Mammary epithelial cell (primary cell): ENCODE measurements at regions of chr11 and their contacts with region 1.

Region 1: DNA sequence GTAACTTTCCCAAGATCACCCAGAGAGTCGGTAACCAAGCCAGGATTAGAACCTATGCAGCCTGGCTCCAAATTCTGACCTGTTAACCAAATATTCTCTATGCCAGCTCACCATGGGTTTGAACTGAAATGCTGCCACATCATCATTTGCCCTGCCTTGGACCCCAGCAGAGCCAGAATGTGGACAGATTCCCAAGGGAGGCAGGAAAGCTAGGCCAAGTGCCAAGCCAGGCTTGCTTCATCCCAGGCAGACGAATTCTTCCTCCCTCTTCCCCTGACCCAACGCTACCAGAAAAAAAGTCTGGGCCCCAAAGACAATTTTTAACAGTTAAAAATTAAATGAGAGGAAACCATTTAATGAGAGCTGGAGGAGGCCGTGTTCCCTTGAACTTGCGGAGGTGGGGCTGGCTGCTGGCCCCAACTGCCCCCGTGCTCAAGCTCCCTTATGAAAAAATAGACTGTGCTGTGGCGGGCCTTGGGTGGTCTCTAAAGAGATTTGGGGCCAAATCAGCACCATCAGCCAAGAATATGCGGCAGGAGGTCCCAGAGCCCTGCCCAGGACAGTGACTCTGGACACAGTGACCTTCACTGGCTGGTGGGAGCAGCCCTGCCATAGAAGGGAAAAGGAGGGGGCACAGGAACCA is 184.1 kb upstream of the SYT13 start:
- DNase-seq: no peak
- H3K4me3 ChIP-seq: no peak overlapping the region
- H3K27ac ChIP-seq: no peak overlapping the region
- H3K4me1 ChIP-seq: no peaks in the 10 kb centered on the region
- H3K27me3 ChIP-seq: no peaks in the 10 kb centered on the region
- CTCF ChIP-seq: no peak

Region 2: DNA sequence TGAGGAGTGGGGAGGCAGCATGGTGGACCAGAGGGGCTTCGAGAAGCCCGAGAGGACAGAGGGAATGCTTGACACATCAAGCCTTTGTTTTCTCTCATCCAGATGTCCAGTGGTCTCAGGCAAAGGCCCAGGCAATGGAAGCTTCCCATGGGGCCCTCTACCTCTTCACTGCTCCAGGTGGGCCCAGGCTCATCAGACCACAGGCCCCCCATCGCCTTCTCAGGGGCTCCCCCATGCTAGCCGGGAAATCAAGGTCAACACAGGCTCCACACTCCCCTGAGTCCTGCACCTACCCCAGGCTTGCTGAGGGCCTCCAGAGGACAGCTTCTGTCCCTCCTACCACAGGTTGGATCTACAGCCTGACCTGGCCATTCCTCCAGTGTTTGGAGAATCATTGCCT is 37.6 kb after region 1 on chr11:
- CTCF ChIA-PET with region 1: no interaction called
- dilution Hi-C with region 1: loop called (anchors 5 kb)
- in situ Hi-C with region 1: no loop called
- intact Hi-C with region 1: no loop called
- DNase-seq: no peak
- H3K4me3 ChIP-seq: no peak overlapping the region
- H3K27ac ChIP-seq: no peak overlapping the region
- H3K4me1 ChIP-seq: no peaks in the 10 kb centered on the region
- H3K27me3 ChIP-seq: no peaks in the 10 kb centered on the region
- CTCF ChIP-seq: no peak

Region 3: DNA sequence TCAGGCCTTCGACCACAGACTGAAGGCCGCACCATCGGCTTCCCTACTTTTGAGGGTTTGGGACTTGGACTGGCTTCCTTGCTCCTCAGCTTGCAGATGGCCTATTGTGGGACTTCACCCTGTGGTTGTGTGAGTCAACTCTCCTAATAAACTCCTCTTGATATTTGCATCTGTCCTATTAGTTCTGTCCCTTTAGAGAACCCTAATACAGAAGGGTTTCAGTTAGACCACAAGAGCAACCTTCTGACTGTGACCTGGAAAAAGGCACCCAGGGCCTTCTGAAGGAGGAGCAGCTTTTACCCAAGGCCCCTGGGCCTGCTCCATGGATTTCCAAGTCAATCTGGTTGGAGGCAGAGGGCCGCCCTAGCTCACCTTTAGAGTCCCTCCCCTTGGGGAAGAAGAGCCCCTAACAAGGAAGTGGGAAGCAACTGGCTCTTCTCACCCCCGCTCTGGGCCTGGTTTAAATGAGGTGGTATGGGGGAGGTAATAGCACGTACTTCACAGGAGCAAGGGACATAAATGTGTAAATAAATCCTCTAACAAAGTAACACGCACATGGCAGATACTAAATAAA is 206.3 kb after region 1 on chr11:
- CTCF ChIA-PET with region 1: no interaction called
- dilution Hi-C with region 1: no loop called
- in situ Hi-C with region 1: no loop called
- intact Hi-C with region 1: no loop called
- DNase-seq: no peak
- H3K4me3 ChIP-seq: no peak overlapping the region
- H3K27ac ChIP-seq: no peak overlapping the region
- H3K4me1 ChIP-seq: no peaks in the 10 kb centered on the region
- H3K27me3 ChIP-seq: no peaks in the 10 kb centered on the region
- CTCF ChIP-seq: no peak

Region 4: DNA sequence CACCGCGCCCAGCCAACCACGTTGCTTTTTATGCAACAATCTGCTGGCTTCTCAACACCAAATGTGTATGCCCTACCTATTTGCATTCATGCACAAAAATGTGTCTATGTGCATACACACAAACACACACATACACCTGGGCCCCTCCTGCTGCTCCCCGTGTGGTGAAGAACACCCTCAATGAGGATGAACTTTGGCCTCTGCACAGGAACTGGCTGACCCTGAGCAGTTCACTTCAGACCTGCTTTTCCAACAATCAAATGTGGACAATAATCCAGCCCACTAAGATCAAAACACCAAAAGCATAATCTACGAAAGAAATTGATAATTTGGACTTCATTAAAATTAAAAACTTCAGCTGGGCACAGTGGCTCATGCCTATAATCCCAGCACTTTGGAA is 309.3 kb after region 1 on chr11:
- CTCF ChIA-PET with region 1: no interaction called
- dilution Hi-C with region 1: no loop called
- in situ Hi-C with region 1: no loop called
- intact Hi-C with region 1: no loop called
- DNase-seq: no peak
- H3K4me3 ChIP-seq: no peak overlapping the region
- H3K27ac ChIP-seq: no peak overlapping the region
- H3K4me1 ChIP-seq: no peaks in the 10 kb centered on the region
- H3K27me3 ChIP-seq: peaks cover 2% of the 10 kb centered on the region
- CTCF ChIP-seq: no peak

Region 5: GRCh38 chr11:45930031-45930794 is 459.9 kb after region 1 on chr11:
- CTCF ChIA-PET with region 1: no interaction called
- dilution Hi-C with region 1: no loop called
- in situ Hi-C with region 1: no loop called
- intact Hi-C with region 1: no loop called
- DNase-seq: peak; percentile 36
- H3K4me3 ChIP-seq: no peak overlapping the region
- H3K27ac ChIP-seq: peak overlapping the region; percentile 64
- H3K4me1 ChIP-seq: peaks cover 72% of the 10 kb centered on the region
- H3K27me3 ChIP-seq: no peaks in the 10 kb centered on the region
- CTCF ChIP-seq: no peak